ENCODE measurements at regions of chr15 and their contacts with region 1.

Region 1: DNA sequence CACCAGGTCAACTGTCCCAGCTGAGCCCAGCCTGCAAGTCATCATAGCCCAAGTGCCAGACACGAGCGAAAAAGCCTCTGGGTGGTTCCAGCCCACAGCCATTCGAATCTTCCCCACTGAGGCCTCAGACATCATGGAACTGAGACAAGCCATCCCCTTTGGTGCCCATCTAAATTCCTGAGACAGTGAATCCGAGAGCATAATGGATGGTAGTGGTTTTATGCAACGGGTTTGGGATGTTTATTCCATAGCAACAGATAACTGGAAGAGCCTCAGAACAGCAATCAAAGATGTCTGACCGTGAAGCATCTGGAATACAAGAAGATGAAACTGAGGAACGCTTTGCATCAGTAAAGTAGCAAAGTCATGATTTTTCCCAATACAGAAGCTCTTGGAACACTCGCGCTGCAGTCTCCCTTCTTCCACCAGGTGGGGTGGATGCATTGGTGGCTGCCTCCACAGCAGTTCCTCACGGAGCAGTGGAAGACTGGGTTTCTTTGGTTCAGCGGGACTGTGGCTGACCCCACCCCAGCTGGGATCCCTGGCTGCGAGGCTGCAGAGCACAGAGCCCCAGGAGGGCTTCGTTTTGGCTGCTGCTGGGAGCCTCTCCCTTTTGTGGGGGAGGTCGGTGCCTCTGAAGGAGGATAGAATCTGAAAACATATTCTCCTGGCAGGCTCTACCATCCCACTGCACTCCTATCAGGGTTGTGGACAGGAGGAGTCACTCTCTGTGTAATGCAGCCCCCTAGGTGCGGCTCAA is 26.4 kb upstream of the PDE8A start:
- DNase-seq: peak; percentile 45
- CTCF ChIP-seq: peak; percentile 72

Region 2: GRCh38 chr15:85125056-85125661 is 169.9 kb after region 1 on chr15:
- in situ Hi-C with region 1: loop called (anchors 25 kb)
- DNase-seq: no peak
- CTCF ChIP-seq: no peak

Region 3: GRCh38 chr15:85318048-85318731 is 362.9 kb after region 1 on chr15:
- in situ Hi-C with region 1: no loop called
- DNase-seq: peak; percentile 61
- CTCF ChIP-seq: no peak